Calu3 (cell line): ENCODE measurements at regions of chr16 and their contacts with region 1.

Region 1: GRCh38 chr16:2858265-2859025 is 475 bp upstream of the PRSS22 start:
- DNase-seq: peak; percentile 98
- H3K4me3 Mint-ChIP-seq: peak overlapping the region; percentile 90
- H3K27ac Mint-ChIP-seq: peak overlapping the region; percentile 88
- H3K4me1 Mint-ChIP-seq: peaks cover 17% of the 10 kb centered on the region
- H3K27me3 Mint-ChIP-seq: no peaks in the 10 kb centered on the region
- CTCF ChIP-seq: peak; percentile 56

Region 2: DNA sequence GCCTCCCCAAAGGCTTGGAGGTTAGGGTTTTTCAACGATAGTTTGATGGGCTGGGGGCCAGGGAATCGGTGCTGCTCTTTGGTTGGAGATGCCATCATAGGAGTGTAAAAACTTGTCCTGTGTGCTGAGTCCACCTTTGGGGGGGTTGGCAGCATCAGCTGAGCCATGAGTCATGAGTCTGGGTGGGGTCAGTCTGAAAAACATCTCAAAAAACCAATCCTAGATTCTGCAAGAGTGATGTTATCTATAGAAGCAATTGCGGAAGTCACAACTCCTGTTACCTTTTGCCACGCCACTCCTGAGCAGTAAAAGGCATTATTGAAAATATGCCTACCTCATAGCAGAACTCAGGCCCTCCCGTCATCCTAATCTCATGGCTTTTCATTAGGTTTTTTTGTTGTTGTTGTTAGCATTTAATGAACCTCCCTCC is 62.7 kb before region 1 on chr16:
- CTCF ChIA-PET with region 1: no interaction called
- intact Hi-C with region 1: loop called (anchors 2 kb)
- DNase-seq: peak; percentile 72
- H3K4me3 Mint-ChIP-seq: peak overlapping the region; percentile 16
- H3K27ac Mint-ChIP-seq: peak overlapping the region; percentile 99
- H3K4me1 Mint-ChIP-seq: peaks cover 50% of the 10 kb centered on the region
- H3K27me3 Mint-ChIP-seq: no peaks in the 10 kb centered on the region
- CTCF ChIP-seq: no peak